OCI-LY7 (cell line): ENCODE measurements at regions of chr3 and their contacts with region 1.

Region 1: DNA sequence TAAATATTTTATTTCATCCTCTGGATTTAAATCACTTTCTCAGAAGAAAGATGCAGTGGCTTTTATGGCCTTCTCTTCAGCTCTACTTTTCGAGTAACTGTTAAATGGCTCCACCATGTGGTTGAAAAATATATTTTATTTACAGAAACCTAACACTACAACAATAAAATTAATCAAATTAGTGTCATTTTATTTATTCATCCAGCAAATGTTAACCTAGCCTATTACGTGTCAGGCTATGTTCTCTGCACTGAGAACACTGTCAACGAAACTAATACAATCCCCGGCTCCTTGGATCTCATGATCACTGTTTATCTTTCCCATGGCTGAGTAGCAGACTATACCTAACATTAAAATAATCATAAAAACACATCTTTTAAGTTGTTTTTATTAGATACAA is 148.0 kb upstream of the OSTN start:
- DNase-seq: peak; percentile 64
- H3K4me3 ChIP-seq: no peak overlapping the region
- H3K27ac ChIP-seq: no peak overlapping the region
- H3K4me1 ChIP-seq: no peaks in the 10 kb centered on the region
- CTCF ChIP-seq: peak; percentile 91

Region 2: DNA sequence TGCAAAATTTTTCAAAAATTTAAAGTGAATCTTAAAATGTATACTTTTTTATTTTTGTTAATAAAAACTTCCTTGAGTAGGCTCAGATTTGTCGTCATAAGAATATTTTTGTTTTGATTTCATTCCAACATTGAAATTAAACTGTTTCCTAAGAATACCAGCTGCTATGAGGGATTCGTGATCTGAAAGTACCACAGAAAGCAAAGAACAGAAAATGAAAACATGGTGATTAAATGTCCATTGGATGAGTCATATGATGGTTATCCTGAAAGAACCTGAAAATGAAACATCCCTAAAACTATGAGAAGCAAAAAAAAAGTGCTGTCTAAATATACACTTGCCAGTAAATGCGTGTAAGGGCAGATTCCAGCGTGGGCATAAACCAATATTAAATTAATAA is 332.4 kb before region 1 on chr3:
- CTCF ChIA-PET with region 1: no interaction called
- POLR2A ChIA-PET with region 1: no interaction called
- intact Hi-C with region 1: loop called (anchors 5 kb)
- DNase-seq: no peak
- H3K4me3 ChIP-seq: no peak overlapping the region
- H3K27ac ChIP-seq: no peak overlapping the region
- H3K4me1 ChIP-seq: peaks cover 16% of the 10 kb centered on the region
- CTCF ChIP-seq: no peak

Region 3: DNA sequence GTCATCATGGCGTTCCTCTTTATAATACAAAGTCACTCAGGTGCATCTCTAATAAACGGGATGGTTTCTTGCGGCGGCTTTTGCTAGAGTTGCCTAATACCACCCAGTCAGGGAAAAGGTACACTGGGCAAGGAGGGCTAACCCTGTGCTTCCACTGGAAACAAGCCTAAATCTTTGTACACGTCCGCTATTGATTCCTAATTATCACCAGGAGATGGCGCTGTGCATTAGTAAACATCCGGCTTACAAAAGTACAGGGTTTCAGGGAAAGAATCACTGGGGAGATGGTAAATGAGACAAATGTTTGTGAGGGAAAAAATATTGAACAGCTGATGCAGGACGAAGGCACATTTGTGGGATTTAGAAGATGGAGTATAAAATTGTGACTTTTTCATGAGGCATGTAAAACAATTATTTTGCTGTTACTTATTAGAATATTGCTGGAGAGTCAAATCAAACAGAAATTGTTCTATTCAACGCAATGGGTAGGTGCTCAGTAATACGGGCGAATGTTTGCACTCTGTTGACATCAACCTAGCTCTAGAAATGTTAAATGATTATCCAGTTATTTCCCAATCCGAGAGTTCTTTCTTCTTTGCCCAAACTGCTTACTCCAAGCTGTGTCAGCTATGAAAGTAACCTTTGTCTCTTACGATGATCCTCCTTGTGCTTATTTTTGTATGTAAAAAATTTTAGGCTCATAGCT is 239.1 kb before region 1 on chr3:
- CTCF ChIA-PET with region 1: no interaction called
- POLR2A ChIA-PET with region 1: interaction called, 4 read pairs
- intact Hi-C with region 1: loop called (anchors 5 kb)
- DNase-seq: peak; percentile 69
- H3K4me3 ChIP-seq: peak overlapping the region; percentile 10
- H3K27ac ChIP-seq: no peak overlapping the region
- H3K4me1 ChIP-seq: no peaks in the 10 kb centered on the region
- CTCF ChIP-seq: peak; percentile 93

Region 4: DNA sequence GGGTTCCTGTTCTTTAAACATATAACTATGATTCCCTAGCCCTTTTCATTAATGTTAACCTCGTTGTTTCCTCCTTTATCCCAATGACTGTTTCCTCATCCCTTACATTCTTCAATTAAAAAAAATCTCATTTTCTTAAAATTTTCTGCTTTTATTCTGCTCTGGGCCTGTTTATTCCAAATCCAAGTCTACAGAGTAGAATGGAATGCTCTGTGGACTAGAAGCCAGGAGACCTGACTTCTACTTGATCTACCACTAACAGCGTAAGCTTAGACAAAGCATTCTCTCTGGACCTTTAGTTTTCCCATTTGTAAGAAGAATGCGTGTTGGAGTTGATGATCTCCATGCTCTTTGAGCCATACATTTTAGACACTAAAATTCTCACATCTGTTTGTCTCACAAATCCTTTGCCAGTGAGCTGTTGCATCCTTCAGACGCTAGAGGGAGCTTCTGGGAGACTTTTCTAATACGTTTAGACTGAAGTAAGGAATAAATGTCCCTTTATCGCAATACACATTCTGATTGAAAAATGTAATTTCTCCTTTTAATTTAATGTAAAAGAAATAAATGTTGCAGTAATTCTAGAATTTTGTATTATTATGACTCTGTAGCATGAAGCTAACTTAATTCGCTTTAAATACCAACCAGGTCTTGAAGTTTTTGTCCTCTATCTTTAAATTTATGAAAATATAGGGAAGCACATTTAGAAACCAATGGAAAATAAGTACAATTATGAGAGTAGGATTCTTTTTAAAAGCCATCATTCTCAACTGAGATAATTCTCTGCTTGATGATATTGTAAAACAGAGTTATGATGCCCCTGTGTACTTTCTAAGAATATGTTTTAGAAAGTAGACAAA is 166.8 kb before region 1 on chr3:
- CTCF ChIA-PET with region 1: no interaction called
- POLR2A ChIA-PET with region 1: no interaction called
- intact Hi-C with region 1: loop called (anchors 2 kb)
- DNase-seq: peak; percentile 67
- H3K4me3 ChIP-seq: no peak overlapping the region
- H3K27ac ChIP-seq: no peak overlapping the region
- H3K4me1 ChIP-seq: no peaks in the 10 kb centered on the region
- CTCF ChIP-seq: peak; percentile 99

Region 5: GRCh38 chr3:191441687-191442086 is 390.6 kb after region 1 on chr3:
- CTCF ChIA-PET with region 1: no interaction called
- POLR2A ChIA-PET with region 1: no interaction called
- intact Hi-C with region 1: no loop called
- DNase-seq: no peak
- H3K4me3 ChIP-seq: no peak overlapping the region
- H3K27ac ChIP-seq: no peak overlapping the region
- H3K4me1 ChIP-seq: no peaks in the 10 kb centered on the region
- CTCF ChIP-seq: no peak